Caco-2 (cell line): ENCODE measurements at regions of chr13 and their contacts with region 1.

Region 1: GRCh38 chr13:74026753-74027152 is 107.5 kb downstream of the KLF12 start:
- DNase-seq: no peak
- H3K4me3 ChIP-seq: no peak overlapping the region
- H3K4me3 Mint-ChIP-seq: no peak overlapping the region
- H3K27ac Mint-ChIP-seq: peak overlapping the region; percentile 75
- H3K4me1 ChIP-seq: peaks cover 80% of the 10 kb centered on the region
- H3K4me1 Mint-ChIP-seq: peaks cover 72% of the 10 kb centered on the region
- H3K27me3 ChIP-seq: no peaks in the 10 kb centered on the region
- H3K27me3 Mint-ChIP-seq: no peaks in the 10 kb centered on the region
- CTCF ChIP-seq: no peak

Region 2: GRCh38 chr13:74040200-74040599 is 13.4 kb after region 1 on chr13:
- CTCF ChIA-PET with region 1: interaction called, 4 read pairs
- POLR2A ChIA-PET with region 1: no interaction called
- intact Hi-C with region 1: loop called (anchors 1 kb)
- DNase-seq: peak; percentile 76 to 79
- H3K4me3 ChIP-seq: no peak overlapping the region
- H3K4me3 Mint-ChIP-seq: no peak overlapping the region
- H3K27ac Mint-ChIP-seq: no peak overlapping the region
- H3K4me1 ChIP-seq: peaks cover 22% of the 10 kb centered on the region
- H3K4me1 Mint-ChIP-seq: peaks cover 22% of the 10 kb centered on the region
- H3K27me3 ChIP-seq: no peaks in the 10 kb centered on the region
- H3K27me3 Mint-ChIP-seq: no peaks in the 10 kb centered on the region
- CTCF ChIP-seq: peak; percentile 79 to 87

Region 3: GRCh38 chr13:74080762-74081161 is 54.0 kb after region 1 on chr13:
- CTCF ChIA-PET with region 1: no interaction called
- POLR2A ChIA-PET with region 1: no interaction called
- intact Hi-C with region 1: loop called (anchors 5 kb)
- DNase-seq: no peak
- H3K4me3 ChIP-seq: no peak overlapping the region
- H3K4me3 Mint-ChIP-seq: no peak overlapping the region
- H3K27ac Mint-ChIP-seq: no peak overlapping the region
- H3K4me1 ChIP-seq: peaks cover 26% of the 10 kb centered on the region
- H3K4me1 Mint-ChIP-seq: peaks cover 23% of the 10 kb centered on the region
- H3K27me3 ChIP-seq: no peaks in the 10 kb centered on the region
- H3K27me3 Mint-ChIP-seq: no peaks in the 10 kb centered on the region
- CTCF ChIP-seq: no peak

Region 4: DNA sequence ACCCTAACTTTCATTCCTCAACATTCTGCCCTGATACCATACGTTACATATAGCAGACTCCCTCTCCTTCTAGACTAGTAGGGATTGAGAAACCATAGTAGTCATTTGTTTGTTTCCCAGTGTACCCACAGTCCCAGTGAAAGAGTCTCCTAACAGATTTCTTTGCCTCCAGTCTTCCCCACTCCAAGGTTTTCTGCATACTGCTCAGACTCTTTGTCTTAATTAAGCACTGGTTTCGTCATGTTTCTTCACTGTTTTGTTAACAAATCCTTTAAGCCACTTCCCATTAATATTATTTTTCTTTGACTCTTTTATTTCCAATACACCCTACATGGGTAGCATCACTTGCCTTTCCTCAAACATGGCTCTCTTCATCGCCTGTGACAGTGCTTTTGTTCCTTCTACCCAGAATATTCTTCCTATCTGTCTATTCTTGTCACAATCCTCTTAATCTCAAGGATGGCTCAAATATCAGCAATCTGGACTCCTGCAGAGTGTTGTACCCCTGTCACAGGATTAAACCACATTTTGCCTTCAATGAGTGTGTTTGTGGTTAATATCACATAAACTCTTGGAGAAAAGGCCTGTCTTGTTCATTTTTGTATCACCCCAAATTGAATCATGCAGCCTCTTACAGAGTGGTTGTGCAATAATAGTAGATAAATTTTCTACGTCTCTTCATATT is 200.2 kb after region 1 on chr13:
- CTCF ChIA-PET with region 1: no interaction called
- POLR2A ChIA-PET with region 1: no interaction called
- intact Hi-C with region 1: loop called (anchors 5 kb)
- DNase-seq: no peak
- H3K4me3 ChIP-seq: no peak overlapping the region
- H3K4me3 Mint-ChIP-seq: no peak overlapping the region
- H3K27ac Mint-ChIP-seq: no peak overlapping the region
- H3K4me1 ChIP-seq: peaks cover 31% of the 10 kb centered on the region
- H3K4me1 Mint-ChIP-seq: peaks cover 14% of the 10 kb centered on the region
- H3K27me3 ChIP-seq: no peaks in the 10 kb centered on the region
- H3K27me3 Mint-ChIP-seq: no peaks in the 10 kb centered on the region
- CTCF ChIP-seq: no peak

Region 5: DNA sequence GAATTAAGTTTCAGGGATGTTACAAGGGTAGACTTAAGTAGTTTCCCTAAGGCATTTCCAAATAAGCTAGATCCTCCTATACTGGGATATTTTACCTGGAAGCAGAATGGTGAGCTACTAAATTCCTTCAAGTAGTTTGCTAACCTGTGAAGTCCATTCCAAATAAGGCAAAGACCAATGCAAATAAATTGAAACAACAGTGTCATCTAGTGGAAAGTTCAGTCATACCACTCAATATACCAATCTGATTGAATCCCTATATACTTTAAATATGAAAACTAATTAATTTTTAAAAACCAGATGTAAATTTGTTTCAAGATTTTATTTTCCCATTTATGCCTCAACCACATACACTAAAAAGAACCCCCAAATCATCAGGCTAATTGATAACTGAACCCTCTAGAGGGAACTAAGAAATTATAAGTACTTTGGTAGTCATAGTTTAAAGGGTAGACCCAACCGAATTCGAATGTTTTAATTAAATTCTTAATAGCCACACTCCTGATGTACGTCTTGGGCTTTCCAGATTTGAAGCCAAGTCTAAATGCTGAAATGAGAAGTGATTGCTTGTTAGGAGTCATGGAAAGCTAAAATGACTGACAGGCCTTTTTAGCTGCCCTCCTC is 1231.5 kb after region 1 on chr13:
- CTCF ChIA-PET with region 1: no interaction called
- POLR2A ChIA-PET with region 1: no interaction called
- intact Hi-C with region 1: loop called (anchors 10 kb)
- DNase-seq: peak in 1 of 2 experiments; percentile 43
- H3K4me3 ChIP-seq: no peak overlapping the region
- H3K4me3 Mint-ChIP-seq: no peak overlapping the region
- H3K27ac Mint-ChIP-seq: no peak overlapping the region
- H3K4me1 ChIP-seq: peaks cover 22% of the 10 kb centered on the region; the same call in 1 of the 2 replicates
- H3K4me1 Mint-ChIP-seq: peaks cover 24% of the 10 kb centered on the region
- H3K27me3 ChIP-seq: no peaks in the 10 kb centered on the region
- H3K27me3 Mint-ChIP-seq: no peaks in the 10 kb centered on the region
- CTCF ChIP-seq: peak; percentile 73 to 75